ENCODE measurements at regions of chr7 and their contacts with region 1.

Region 1: GRCh38 chr7:38107486-38107893 is 70.6 kb upstream of the STARD3NL start:
- DNase-seq: peak; percentile 84
- H3K4me3 Mint-ChIP-seq: no peak overlapping the region
- H3K27ac Mint-ChIP-seq: no peak overlapping the region
- H3K4me1 Mint-ChIP-seq: no peaks in the 10 kb centered on the region
- H3K27me3 Mint-ChIP-seq: peaks cover 8% of the 10 kb centered on the region

Region 2: DNA sequence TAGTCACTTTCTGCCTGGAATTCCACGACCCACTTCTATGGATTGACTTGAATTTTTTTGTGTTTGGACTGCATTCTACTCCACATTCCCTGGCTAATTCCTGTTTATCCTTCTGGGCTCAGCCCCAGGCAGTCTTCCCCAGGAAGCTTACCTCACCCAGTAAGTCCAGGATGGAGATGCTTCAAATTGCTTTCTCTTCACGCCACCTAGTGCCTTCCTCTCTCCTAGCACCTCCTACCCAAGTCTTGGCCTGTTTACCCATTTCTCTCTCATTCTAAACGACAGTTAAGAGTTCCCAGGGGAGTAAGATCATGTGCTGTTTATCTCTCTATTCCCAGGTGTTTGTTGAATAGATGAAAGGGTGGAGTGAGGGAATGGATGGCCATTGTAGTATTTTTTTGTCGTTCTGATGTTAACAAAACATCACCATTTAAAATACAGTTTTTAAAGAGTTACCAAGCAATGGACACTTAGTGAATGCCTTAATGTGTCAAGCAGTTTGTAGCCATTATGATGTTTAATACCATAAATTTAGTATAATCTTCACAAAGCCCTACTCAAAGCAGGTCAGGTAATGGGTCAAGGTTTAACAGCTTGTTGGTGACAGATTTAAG is 211.4 kb after region 1 on chr7:
- CTCF ChIA-PET with region 1: interaction called, 6 read pairs
- intact Hi-C with region 1: loop called (anchors 1 kb)
- DNase-seq: peak; percentile 33
- H3K4me3 Mint-ChIP-seq: peak overlapping the region; percentile 27
- H3K27ac Mint-ChIP-seq: no peak overlapping the region
- H3K4me1 Mint-ChIP-seq: peaks cover 26% of the 10 kb centered on the region
- H3K27me3 Mint-ChIP-seq: no peaks in the 10 kb centered on the region